GM10248 (cell line): ENCODE measurements at regions of chr1 and their contacts with region 1.

Region 1: GRCh38 chr1:22105611-22106207 is 37.2 kb downstream of the WNT4 start:
- DNase-seq: peak; percentile 48
- CTCF ChIP-seq: peak; percentile 70

Region 2: GRCh38 chr1:22093513-22093912 is 12.2 kb before region 1 on chr1:
- CTCF ChIA-PET with region 1: interaction called, 19 read pairs
- POLR2A ChIA-PET with region 1: no interaction called
- DNase-seq: no peak
- CTCF ChIP-seq: no peak